Activated T-helper 2 cell treated with anti-CD3 and anti-CD28 coated beads, Interferon-gamma antibody, Interleukin-2, Interleukin-4, amounts not matched to agents 10 μg/mL and 5 μg/mL and 100 μg/mL, durations not matched to agents 14 hours and 24 hours and 36 hours (primary cell): ENCODE measurements at regions of chr12 and their contacts with region 1.

Region 1: GRCh38 chr12:107402041-107403022 is 283.3 kb upstream of the PWP1 start:
- DNase-seq: peak; percentile 40
- H3K4me3 Mint-ChIP-seq: no peak overlapping the region
- H3K27ac Mint-ChIP-seq: no peak overlapping the region
- H3K4me1 Mint-ChIP-seq: peaks cover 19% of the 10 kb centered on the region
- H3K27me3 Mint-ChIP-seq: no peaks in the 10 kb centered on the region

Region 2: DNA sequence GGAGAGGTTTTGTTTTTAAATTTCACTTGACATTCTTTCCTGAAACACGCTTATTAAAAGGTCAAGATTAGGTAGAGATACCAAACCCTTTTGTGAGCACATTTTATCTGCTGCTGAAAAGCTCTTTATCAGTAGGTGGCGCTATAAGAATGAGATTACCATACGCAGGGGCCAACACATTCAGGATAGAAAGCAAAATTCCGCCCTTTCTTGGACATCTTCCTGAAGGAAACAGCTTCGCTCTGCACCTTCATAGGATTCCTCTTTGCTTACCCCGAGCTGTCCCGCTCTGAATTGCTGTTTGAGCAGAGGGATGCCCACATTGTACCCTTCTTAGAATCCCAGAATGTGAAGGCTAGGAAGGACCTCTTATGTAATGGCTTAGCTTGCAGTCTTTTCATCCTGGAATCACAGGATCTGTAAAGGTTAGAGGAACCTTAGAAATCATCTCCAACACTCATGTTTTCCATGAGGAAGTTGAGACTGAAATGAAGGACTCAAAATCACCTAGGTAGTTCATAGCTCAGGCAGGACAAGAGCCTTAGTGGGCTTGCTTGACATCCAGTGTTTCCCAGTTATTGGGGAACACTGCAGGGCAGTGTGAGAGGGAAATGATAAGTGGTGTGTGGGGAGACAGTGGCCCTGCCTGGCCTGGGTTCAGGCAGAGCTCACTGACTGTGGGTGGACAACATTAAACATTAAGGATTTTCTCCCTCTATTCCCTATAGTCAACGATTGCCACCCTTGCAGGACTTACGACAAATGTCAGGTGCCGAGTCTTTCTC is 270.3 kb before region 1 on chr12:
- intact Hi-C with region 1: loop called (anchors 1 kb)
- DNase-seq: no peak
- H3K4me3 Mint-ChIP-seq: no peak overlapping the region
- H3K27ac Mint-ChIP-seq: no peak overlapping the region
- H3K4me1 Mint-ChIP-seq: peaks cover 2% of the 10 kb centered on the region
- H3K27me3 Mint-ChIP-seq: no peaks in the 10 kb centered on the region

Region 3: DNA sequence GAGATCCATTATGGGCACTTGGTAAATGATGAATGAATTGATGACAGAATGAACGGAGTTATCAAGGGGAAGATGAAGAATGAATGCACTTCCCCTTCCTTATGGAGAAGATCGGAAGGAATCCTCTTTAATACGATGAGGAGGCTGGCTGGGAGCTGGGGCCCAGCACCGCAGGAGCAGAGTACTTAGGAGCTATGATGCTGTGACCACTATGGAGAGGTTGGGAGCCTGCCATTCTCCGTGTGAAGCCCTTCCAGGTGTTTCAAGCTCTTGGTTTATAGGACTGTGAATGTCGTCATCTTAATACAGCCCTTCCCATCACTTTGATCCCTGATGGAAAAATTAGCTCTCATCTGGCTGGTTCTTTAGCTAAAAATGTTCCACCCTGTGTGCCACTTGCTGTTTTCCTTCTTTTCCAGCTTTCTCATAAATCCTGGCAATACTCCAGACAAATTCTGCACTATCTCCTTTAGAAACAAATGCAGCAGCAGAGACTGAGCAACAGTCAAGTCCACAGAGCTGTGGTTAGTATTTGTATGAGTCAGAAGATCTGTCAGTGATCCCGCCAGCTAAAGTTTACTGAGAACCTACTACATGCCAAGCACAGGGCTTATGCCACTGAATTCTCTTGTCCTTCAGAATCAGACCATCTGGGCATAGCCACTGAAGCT is 45.9 kb before region 1 on chr12:
- intact Hi-C with region 1: loop called (anchors 10 kb)
- DNase-seq: no peak
- H3K4me3 Mint-ChIP-seq: no peak overlapping the region
- H3K27ac Mint-ChIP-seq: no peak overlapping the region
- H3K4me1 Mint-ChIP-seq: peaks cover 64% of the 10 kb centered on the region
- H3K27me3 Mint-ChIP-seq: no peaks in the 10 kb centered on the region

Region 4: GRCh38 chr12:107372229-107372658 is 30.1 kb before region 1 on chr12:
- intact Hi-C with region 1: loop called (anchors 1 kb)
- DNase-seq: peak; percentile 36
- H3K4me3 Mint-ChIP-seq: peak overlapping the region; percentile 47
- H3K27ac Mint-ChIP-seq: peak overlapping the region; percentile 87
- H3K4me1 Mint-ChIP-seq: peaks cover 67% of the 10 kb centered on the region
- H3K27me3 Mint-ChIP-seq: no peaks in the 10 kb centered on the region

Region 5: GRCh38 chr12:107607464-107608392 is 205.4 kb after region 1 on chr12:
- intact Hi-C with region 1: loop called (anchors 1 kb)
- DNase-seq: peak; percentile 62
- H3K4me3 Mint-ChIP-seq: no peak overlapping the region
- H3K27ac Mint-ChIP-seq: no peak overlapping the region
- H3K4me1 Mint-ChIP-seq: no peaks in the 10 kb centered on the region
- H3K27me3 Mint-ChIP-seq: no peaks in the 10 kb centered on the region